Tibial artery (tissue), 4 donors: ENCODE measurements at regions of chr10 and their contacts with region 1.

Region 1: DNA sequence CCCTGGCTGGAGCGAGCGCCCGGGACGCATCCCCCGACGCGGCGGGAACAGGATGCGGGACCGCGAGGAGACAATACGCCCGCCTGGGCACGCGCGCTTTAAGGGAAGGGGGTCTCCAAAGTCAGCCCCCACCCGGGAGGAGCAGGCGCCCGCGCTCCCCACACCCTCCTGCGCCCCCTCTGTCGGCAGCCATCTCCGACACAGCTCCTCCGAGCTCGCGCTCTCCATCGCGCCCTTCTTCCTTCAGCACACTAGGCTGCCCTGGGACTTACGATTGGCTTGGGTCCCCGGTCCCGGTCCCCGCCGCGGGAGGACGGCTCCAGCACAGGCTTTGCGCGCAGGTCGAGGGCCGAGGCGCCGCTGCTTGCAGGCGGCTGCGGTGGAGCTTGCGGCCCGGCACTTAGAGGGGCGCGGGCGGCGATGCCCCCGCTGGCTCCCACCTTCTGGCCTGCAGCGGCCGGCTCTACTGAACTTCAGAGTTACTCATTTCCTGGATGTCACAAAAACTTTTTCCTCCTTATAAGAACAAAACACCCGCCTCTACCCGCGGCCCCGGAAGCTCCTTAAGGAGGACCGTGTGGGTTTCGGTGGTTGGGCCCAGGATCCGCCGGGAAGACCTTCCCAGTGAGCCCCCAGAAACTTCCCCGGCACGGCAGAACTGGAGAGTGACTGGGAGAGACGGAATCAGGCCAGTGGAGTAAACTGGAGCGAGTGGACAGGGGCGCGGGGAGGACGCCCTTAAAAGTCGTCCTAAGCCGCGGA is at the start of gene ITPRIP:
- DNase-seq: peak; percentile 88 to 90
- H3K4me3 ChIP-seq: peak within 1 kb of the TSS; percentile 63 to 86
- H3K27ac ChIP-seq: peak within 1 kb of the TSS; percentile 92 to 98
- H3K4me1 ChIP-seq: peaks cover 0 to 52% (median 41%) of the 10 kb centered on the region in 4 donors
- H3K27me3 ChIP-seq: no peaks in the 10 kb centered on the region
- CTCF ChIP-seq: no peak

Region 2: DNA sequence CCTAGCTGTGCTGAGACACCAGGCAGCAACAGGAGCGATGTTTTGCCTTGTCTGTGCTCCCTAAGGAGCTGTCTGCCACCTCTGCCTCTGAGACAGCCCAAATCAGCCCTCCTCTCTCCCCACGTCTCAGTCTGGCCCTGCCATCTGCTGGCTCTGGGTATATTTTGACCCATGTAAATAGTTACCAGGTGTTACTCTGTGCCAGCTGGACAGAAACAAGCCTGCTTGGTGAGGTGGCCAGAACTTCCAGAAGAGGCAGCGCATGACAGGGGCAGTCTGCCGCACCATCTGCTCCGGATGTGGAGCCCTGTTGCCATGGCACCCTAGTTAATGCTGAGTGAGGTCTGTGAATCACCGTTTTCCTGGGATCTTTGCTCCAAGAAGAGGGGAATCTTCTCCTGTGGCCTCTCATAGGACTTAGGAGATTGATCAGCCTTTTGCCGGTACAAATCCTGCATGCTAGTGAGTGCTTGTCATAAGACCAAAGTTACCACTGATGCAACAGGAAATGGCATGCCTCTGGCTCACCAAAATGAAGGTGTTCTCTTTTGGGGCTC is 37.3 kb before region 1 on chr10:
- intact Hi-C with region 1: loop called (anchors 2 kb)
- DNase-seq: peak; percentile 84 to 94
- H3K4me3 ChIP-seq: peak overlapping the region in 1 of 2 donors; percentile 23
- H3K27ac ChIP-seq: peak overlapping the region; percentile 80 to 95
- H3K4me1 ChIP-seq: peaks cover 6 to 54% (median 27%) of the 10 kb centered on the region in 4 donors
- H3K27me3 ChIP-seq: no peaks in the 10 kb centered on the region
- CTCF ChIP-seq: peak; percentile 15 to 24